ENCODE measurements at regions of chr13 and their contacts with region 1.

Region 1: GRCh38 chr13:105410602-105411001 is 1124.9 kb downstream of the EFNB2 start:
- DNase-seq: peak; percentile 52
- H3K4me3 ChIP-seq: peak overlapping the region in 1 of 3 experiments; percentile 55
- H3K27ac ChIP-seq: no peak overlapping the region
- H3K4me1 ChIP-seq: no peaks in the 10 kb centered on the region
- H3K27me3 ChIP-seq: no peaks in the 10 kb centered on the region
- CTCF ChIP-seq: peak; percentile 68 to 80
- POLR2A ChIP-seq: no peak

Region 2: DNA sequence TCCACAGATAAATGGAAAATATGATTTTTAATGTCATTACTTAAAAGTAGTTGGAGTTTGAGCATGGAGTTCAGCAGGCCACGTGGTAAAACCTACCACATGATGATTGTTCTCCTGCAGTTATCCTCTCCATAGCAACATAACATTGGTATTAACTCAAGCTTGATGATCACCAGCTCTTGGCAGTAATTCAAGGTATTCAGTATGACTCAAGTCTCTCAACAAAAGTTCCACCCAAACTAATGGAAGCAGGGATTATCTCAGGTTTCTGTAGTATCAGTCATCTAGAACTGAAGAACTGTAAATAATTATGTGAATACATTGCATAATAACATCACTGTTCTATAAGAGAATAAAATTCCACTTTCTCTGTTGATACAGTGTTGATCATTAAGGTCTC is 32.3 kb after region 1 on chr13:
- CTCF ChIA-PET with region 1: interaction called, 10 read pairs
- POLR2A ChIA-PET with region 1: no interaction called
- dilution Hi-C with region 1: no loop called
- intact Hi-C with region 1: no loop called
- DNase-seq: peak; percentile 93
- H3K4me3 ChIP-seq: no peak overlapping the region
- H3K27ac ChIP-seq: peak overlapping the region; percentile 65
- H3K4me1 ChIP-seq: peaks cover 24% of the 10 kb centered on the region
- H3K27me3 ChIP-seq: no peaks in the 10 kb centered on the region
- CTCF ChIP-seq: no peak
- POLR2A ChIP-seq: no peak

Region 3: DNA sequence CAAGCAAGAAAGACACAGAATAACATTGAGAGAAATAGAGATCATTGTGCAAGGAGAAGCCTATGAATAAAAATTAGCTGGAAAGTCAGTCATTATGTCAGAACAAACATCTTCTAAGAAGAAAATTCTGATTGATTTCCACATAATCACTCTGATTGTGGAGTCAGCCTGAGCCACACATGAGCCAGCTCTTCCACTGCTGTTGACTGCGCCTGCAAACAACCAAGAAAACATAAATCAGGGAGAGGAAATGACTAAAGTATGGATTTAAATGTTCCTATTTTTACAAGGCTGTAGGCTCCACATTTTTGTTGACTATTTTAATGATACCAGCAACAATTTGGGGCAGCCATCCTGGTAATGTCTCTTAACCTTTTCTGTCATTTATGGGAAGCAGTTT is 162.5 kb after region 1 on chr13:
- CTCF ChIA-PET with region 1: interaction called, 10 read pairs
- POLR2A ChIA-PET with region 1: no interaction called
- dilution Hi-C with region 1: no loop called
- intact Hi-C with region 1: no loop called
- DNase-seq: peak; percentile 41
- H3K4me3 ChIP-seq: no peak overlapping the region
- H3K27ac ChIP-seq: no peak overlapping the region
- H3K4me1 ChIP-seq: peaks cover 4% of the 10 kb centered on the region
- H3K27me3 ChIP-seq: no peaks in the 10 kb centered on the region
- CTCF ChIP-seq: no peak
- POLR2A ChIP-seq: no peak

Region 4: DNA sequence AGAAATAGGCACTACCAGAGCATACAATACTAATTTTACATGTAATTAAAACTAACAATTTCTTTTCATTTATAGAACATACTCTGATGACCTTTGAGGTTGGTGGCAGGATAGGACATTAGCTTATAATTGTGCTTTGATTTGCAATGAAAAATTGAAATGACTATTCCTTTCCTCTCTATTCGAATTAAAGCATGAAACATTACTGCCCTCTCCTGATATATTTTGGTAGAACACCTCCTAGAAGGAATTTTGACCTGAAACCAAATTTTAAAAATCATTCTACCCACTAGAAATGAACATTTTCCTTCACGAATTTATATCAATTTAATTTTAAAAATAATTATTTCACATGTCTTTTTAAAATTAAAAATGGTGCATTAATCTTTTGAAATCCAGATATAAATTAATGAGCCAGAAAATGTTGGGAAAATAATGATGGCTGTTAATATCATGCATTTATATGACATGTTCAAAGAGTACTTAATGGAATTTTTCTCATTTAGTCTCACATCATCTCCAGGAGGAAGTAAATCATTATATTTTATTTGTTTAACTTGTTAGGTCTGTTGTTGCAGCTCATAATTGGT is 1713.6 kb after region 1 on chr13:
- CTCF ChIA-PET with region 1: interaction called, 11 read pairs
- POLR2A ChIA-PET with region 1: no interaction called
- dilution Hi-C with region 1: no loop called
- intact Hi-C with region 1: loop called (anchors 2 kb)
- DNase-seq: peak; percentile 54
- H3K4me3 ChIP-seq: no peak overlapping the region
- H3K27ac ChIP-seq: no peak overlapping the region
- H3K4me1 ChIP-seq: no peaks in the 10 kb centered on the region
- H3K27me3 ChIP-seq: no peaks in the 10 kb centered on the region
- CTCF ChIP-seq: peak; percentile 20 to 22
- POLR2A ChIP-seq: no peak